ENCODE measurements at regions of chr17 and their contacts with region 1.

Region 1: DNA sequence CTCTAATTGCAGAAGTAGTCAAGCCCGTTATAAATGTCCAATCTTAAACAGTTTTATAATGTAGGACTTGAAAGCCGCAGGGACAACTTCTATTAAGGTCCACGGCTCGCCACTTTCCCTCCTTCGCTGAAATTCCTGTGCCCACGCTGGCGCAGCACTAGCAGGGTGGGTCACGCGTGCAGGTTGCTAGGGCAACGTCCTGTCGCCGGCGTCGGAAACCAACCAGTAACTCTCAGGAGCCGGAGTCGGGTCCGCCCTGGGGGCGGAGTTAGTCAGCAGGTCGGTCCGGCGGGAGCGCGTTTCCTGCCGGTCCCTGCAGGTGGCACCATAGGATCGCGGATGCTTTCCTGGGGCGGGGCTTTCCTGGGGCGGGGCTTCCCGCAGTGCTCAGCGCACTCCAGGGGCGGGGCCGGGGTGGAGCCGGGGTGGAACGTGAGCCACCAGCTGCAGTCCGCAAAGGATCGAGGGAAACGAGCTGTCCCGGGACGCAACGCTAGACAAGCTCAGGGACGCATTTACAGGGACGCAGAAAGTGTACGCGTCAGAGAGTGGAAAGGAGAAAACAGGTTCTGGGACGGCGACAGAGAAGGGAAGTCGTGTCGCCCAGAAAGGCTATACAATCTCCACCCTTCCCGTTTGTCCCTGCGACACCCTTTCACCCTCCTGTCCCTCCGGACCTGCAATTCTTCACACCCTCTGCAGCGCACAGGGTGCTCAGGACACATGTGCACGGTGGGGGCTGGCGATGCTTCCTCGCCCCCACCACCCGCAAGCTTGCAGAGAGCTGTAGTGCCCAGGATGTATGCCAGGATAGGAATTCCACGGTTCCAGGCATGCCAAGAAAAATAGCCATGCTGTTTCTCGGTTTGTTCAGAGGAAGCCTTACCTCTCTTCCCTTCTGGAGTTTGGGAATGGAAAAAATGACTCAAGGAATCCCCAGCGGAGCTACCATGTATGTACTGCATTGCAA is 12.4 kb downstream of the COPZ2 start:
- DNase-seq: peak; percentile 79
- H3K4me3 ChIP-seq: peak overlapping the region; percentile 71
- CTCF ChIP-seq: peak; percentile 82

Region 2: DNA sequence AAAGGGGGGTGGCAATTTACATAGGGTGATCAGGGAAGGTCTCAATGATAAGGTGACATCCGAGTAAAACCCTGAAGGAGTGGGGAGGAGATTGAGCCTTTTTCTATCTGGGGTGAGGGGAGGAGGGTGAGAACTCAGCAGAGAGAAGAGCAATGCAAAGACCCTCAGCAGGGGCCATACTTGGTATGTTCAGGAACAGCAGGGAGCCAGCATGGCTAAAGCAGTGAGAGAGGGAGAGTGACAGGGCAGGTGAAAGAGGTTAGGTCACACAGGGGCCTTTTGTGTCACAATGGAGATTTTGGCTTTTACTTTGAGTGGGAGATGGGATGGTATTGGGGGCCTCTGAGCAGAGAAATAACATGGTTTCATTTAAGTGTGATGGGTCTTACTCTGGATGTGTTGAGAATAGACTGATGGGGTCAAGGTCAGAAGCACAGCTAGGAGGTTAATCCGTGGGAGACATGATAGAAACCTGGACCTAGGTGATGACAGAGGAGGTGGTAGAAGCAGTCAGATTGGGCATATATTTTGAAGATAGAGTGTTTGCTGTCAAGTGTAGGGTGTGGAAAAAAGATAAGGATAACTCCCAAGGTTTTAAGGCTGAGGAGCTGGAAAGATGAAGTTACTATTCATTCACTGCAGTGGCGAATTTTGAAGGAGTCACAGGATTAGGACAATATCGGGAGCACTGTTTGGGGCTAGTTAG is 123.0 kb before region 1 on chr17:
- CTCF ChIA-PET with region 1: no interaction called
- POLR2A ChIA-PET with region 1: no interaction called
- DNase-seq: no peak
- H3K4me3 ChIP-seq: no peak overlapping the region
- CTCF ChIP-seq: no peak

Region 3: GRCh38 chr17:48011405-48012150 is 13.6 kb before region 1 on chr17:
- CTCF ChIA-PET with region 1: interaction called, 24 read pairs
- POLR2A ChIA-PET with region 1: no interaction called
- DNase-seq: no peak
- H3K4me3 ChIP-seq: peak overlapping the region; percentile 54
- CTCF ChIP-seq: peak; percentile 68

Region 4: GRCh38 chr17:48047741-48048383 is 22.6 kb after region 1 on chr17 and contains the start of gene NFE2L1:
- CTCF ChIA-PET with region 1: interaction called, 28 read pairs
- POLR2A ChIA-PET with region 1: interaction called, 36 read pairs
- DNase-seq: peak; percentile 98
- H3K4me3 ChIP-seq: peak within 1 kb of the TSS; percentile 93
- CTCF ChIP-seq: no peak

Region 5: GRCh38 chr17:48068491-48068961 is 43.3 kb after region 1 on chr17:
- CTCF ChIA-PET with region 1: interaction called, 305 read pairs
- POLR2A ChIA-PET with region 1: interaction called, 6 read pairs
- DNase-seq: peak; percentile 31
- H3K4me3 ChIP-seq: no peak overlapping the region
- CTCF ChIP-seq: peak; percentile 39

Region 6: DNA sequence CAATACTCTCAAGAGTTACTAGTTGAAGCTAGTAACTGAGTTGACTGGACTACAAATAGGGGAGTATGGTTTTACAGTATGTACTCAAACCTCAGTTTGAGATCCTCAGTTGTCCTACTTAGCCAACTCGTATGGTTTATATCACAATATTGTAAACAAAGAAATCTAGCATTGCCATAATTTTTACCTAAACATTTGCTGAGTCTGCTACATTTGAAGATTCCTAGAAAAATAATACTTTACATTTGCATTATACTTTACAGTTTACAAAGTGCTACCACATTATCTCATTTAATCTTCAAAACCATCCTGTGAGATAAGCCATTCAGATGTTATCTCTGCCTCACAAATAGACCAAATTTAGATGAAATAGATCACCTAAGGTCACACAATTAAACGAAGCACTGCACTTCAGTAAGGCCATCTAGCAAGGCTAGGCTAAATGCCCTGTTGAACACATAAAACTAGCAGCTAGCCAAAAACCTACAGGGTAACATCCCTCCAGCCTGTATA is 59.8 kb after region 1 on chr17:
- CTCF ChIA-PET with region 1: interaction called, 305 read pairs
- POLR2A ChIA-PET with region 1: interaction called, 3 read pairs
- DNase-seq: no peak
- H3K4me3 ChIP-seq: no peak overlapping the region
- CTCF ChIP-seq: no peak

Region 7: GRCh38 chr17:48107168-48108132 is 82.2 kb after region 1 on chr17 and contains the start of gene SNX11:
- CTCF ChIA-PET with region 1: interaction called, 30 read pairs
- POLR2A ChIA-PET with region 1: interaction called, 10 read pairs
- DNase-seq: peak; percentile 24
- H3K4me3 ChIP-seq: peak within 1 kb of the TSS; percentile 97
- CTCF ChIP-seq: no peak